CD4-positive, alpha-beta T cell (primary cell): ENCODE measurements at regions of chr3 and their contacts with region 1.

Region 1: DNA sequence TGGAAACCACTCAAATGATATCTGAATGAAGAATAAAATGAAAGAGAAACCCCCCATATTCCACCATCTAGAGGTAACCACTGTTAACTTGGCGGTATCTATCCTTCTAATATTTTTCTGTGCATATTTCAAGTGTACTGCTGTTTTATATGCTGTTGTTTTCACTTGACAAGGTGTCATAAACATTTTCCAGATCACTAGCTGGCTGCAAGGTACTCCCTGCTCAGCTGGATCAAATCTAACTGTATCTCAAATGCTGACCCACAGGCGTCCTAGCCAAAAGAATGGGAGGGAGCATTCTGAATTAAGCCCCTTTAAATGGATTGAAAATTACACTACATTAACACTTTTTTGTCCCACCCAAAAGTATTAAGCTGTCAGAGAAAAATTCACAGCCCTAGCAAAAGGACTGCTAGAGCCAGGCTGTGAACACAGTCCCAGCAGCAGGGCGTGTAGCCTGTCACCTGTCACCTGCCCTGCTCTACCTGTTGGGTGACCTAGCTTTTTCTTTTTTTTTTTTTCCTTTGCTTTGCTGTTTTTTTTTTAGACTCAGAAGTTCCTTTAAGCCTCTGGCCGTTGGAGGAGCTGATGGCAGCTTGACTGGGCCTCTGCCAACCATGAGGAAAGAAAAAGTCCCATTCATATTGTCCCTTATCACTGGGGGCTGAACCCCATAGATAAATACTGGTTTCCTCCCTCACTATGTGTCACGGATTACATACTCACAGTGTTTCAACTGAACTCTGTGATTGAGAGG is 93.7 kb upstream of the TSC22D2 start:
- DNase-seq: no peak
- ATAC-seq: no peak
- H3K4me3 ChIP-seq: no peak overlapping the region
- H3K4me3 Mint-ChIP-seq: no peak overlapping the region
- H3K27ac ChIP-seq: no peak overlapping the region
- H3K27ac Mint-ChIP-seq: no peak overlapping the region
- H3K4me1 ChIP-seq: no peaks in the 10 kb centered on the region
- H3K4me1 Mint-ChIP-seq: no peaks in the 10 kb centered on the region
- H3K27me3 ChIP-seq: peaks cover 0 to 5% of the 10 kb centered on the region in 2 experiments
- H3K27me3 Mint-ChIP-seq: peaks cover 14% of the 10 kb centered on the region
- CTCF ChIP-seq: no peak

Region 2: DNA sequence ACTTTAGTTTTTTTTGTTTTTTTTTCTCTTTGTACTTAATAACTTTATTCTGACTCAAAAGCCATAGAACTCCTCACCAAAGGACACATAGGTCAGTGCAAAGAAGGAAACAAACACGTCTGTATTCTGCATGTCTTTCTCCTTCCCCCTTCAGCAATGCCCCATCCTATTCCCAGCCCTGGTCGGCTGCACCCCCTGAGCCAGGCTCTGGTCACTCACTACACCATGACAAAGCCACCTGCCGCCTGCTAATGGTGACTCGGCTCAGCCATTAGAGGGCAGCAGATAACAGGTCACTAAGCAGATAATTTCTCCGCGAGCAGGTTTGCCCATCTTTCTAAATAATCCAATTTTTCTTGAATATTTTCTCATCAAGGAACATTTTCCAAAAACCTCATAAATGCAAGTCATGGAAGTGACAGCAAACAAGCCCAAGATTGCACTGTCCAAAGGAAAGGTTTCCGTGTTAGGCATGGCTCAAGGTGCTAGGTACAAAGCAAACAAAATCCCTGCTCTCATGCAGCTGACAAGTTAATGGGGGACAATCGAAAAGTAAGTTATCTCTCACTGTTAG is 802.1 kb before region 1 on chr3:
- CTCF ChIA-PET with region 1: no interaction called
- POLR2A ChIA-PET with region 1: no interaction called
- intact Hi-C with region 1: no loop called
- DNase-seq: peak in 5 of 14 experiments; percentile 3 to 48 (median 34)
- ATAC-seq: no peak
- H3K4me3 ChIP-seq: no peak overlapping the region
- H3K4me3 Mint-ChIP-seq: no peak overlapping the region
- H3K27ac ChIP-seq: no peak overlapping the region
- H3K27ac Mint-ChIP-seq: no peak overlapping the region
- H3K4me1 ChIP-seq: no peaks in the 10 kb centered on the region
- H3K4me1 Mint-ChIP-seq: peaks cover 11% of the 10 kb centered on the region
- H3K27me3 ChIP-seq: peaks cover 0 to 9% of the 10 kb centered on the region in 2 experiments
- H3K27me3 Mint-ChIP-seq: peaks cover 32% of the 10 kb centered on the region
- CTCF ChIP-seq: peak; percentile 42

Region 3: GRCh38 chr3:149871855-149872254 is 442.6 kb before region 1 on chr3:
- CTCF ChIA-PET with region 1: no interaction called
- POLR2A ChIA-PET with region 1: no interaction called
- intact Hi-C with region 1: no loop called
- DNase-seq: no peak
- ATAC-seq: no peak
- H3K4me3 ChIP-seq: no peak overlapping the region
- H3K4me3 Mint-ChIP-seq: no peak overlapping the region
- H3K27ac ChIP-seq: no peak overlapping the region
- H3K27ac Mint-ChIP-seq: no peak overlapping the region
- H3K4me1 ChIP-seq: no peaks in the 10 kb centered on the region
- H3K4me1 Mint-ChIP-seq: peaks cover 13% of the 10 kb centered on the region
- H3K27me3 ChIP-seq: no peaks in the 10 kb centered on the region
- H3K27me3 Mint-ChIP-seq: no peaks in the 10 kb centered on the region
- CTCF ChIP-seq: no peak

Region 4: GRCh38 chr3:150268426-150269391 is 45.7 kb before region 1 on chr3:
- CTCF ChIA-PET with region 1: no interaction called
- POLR2A ChIA-PET with region 1: no interaction called
- intact Hi-C with region 1: no loop called
- DNase-seq: no peak
- ATAC-seq: no peak
- H3K4me3 ChIP-seq: no peak overlapping the region
- H3K4me3 Mint-ChIP-seq: no peak overlapping the region
- H3K27ac ChIP-seq: no peak overlapping the region
- H3K27ac Mint-ChIP-seq: no peak overlapping the region
- H3K4me1 ChIP-seq: no peaks in the 10 kb centered on the region
- H3K4me1 Mint-ChIP-seq: no peaks in the 10 kb centered on the region
- H3K27me3 ChIP-seq: no peaks in the 10 kb centered on the region
- H3K27me3 Mint-ChIP-seq: peaks cover 12% of the 10 kb centered on the region
- CTCF ChIP-seq: no peak

Region 5: DNA sequence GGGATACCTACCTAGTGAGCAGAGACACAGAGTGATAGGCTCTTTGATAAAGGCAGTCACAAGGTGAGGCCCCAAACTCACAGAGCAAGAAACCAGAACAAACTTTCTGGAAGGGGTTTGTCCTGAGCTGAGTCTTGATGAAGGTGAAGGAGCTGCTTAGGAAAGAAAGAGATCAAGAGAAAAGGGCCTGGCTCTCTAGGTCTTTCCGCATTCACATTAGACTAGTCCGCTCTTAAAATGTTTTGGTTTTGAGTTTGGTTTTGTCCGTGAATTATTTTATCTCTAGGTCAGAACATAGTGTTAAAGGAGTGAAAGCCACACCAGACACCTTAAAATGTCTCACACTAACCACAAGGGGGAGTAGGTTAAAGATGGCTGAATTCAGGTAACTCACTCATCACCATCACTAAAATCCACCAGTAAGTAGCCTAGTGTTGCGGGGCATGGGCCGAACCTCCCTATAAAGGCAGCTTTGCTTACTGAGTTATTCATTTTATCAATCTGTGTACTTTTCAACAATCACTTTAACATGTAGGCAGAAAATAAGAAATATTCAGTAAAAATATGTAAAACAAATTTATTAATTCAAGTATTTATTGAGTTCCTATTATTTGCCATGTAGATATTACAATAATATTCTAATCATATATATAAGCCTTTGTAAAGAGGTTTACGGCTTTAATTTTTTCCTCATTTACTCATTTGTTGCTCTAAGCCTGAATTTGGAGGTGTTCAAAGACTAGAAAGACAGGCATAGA is 27.9 kb before region 1 on chr3:
- CTCF ChIA-PET with region 1: no interaction called
- POLR2A ChIA-PET with region 1: no interaction called
- intact Hi-C with region 1: loop called in 1 of 2 experiments (anchors 1 kb)
- DNase-seq: peak in 5 of 14 experiments; percentile 1 to 68 (median 59)
- ATAC-seq: peak; percentile 82
- H3K4me3 ChIP-seq: no peak overlapping the region
- H3K4me3 Mint-ChIP-seq: no peak overlapping the region
- H3K27ac ChIP-seq: no peak overlapping the region
- H3K27ac Mint-ChIP-seq: no peak overlapping the region
- H3K4me1 ChIP-seq: no peaks in the 10 kb centered on the region
- H3K4me1 Mint-ChIP-seq: no peaks in the 10 kb centered on the region
- H3K27me3 ChIP-seq: peaks cover 0 to 8% of the 10 kb centered on the region in 2 experiments
- H3K27me3 Mint-ChIP-seq: peaks cover 16% of the 10 kb centered on the region
- CTCF ChIP-seq: peak; percentile 65

Region 6: DNA sequence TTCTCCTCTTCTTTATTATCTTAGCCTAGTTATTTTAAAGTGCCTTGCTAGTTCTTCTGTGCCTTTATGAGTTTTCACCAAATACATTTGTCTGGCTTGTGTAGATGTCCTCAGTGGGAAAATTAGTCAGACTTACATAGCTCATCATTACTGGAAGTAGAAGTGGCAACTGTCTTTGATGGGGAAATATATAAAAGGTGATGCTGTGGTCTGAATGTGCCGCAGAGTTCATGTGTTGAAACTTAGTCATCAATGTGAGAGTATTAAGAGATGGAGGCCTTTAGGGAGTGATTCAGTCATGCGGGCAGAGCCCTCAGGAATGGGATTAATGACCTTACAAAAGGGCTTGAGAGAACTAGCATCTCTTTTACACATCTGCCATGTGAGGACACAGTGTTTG is 395.7 kb after region 1 on chr3:
- CTCF ChIA-PET with region 1: no interaction called
- POLR2A ChIA-PET with region 1: no interaction called
- intact Hi-C with region 1: no loop called
- DNase-seq: no peak
- ATAC-seq: no peak
- H3K4me3 ChIP-seq: no peak overlapping the region
- H3K4me3 Mint-ChIP-seq: no peak overlapping the region
- H3K27ac ChIP-seq: no peak overlapping the region
- H3K27ac Mint-ChIP-seq: no peak overlapping the region
- H3K4me1 ChIP-seq: no peaks in the 10 kb centered on the region
- H3K4me1 Mint-ChIP-seq: peaks cover 8% of the 10 kb centered on the region
- H3K27me3 ChIP-seq: no peaks in the 10 kb centered on the region
- H3K27me3 Mint-ChIP-seq: no peaks in the 10 kb centered on the region
- CTCF ChIP-seq: no peak